ENCODE measurements at regions of chr2 and their contacts with region 1.

Region 1: GRCh38 chr2:227324995-227325838 is at the start of gene MFF:
- DNase-seq: peak; percentile 85 to 98 (median 94)

Region 2: GRCh38 chr2:227471924-227472264 is 146.7 kb after region 1 on chr2 and contains the start of gene AGFG1:
- intact Hi-C with region 1: loop called (anchors 5 kb)
- DNase-seq: peak; percentile 79 to 95 (median 90)

Measured in head of caudate nucleus (tissue), 42 donors.